T-cell (primary cell): ENCODE measurements at regions of chr9 and their contacts with region 1.

Region 1: DNA sequence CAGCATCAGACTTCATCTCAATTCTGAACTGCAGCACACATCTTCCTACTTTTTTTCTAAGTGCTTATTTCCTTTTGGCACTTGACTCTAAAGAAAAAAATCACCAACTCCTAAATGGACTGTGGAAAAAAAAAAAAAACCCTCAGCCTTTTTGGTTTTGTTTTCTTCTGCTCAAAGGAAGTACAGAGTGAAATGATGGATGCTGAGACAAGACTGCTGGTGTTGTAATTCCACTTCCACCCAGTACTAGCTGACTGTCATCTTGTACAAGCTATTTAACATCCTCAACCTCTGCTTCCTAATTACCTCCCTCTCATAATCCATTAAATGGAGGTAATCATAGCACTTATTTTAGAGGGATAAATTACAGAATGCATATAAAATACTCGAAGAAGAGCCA is 171.5 kb upstream of the GNA14 start:
- DNase-seq: no peak
- ATAC-seq: peak in 1 of 4 experiments; percentile 64
- H3K4me3 ChIP-seq: no peak overlapping the region
- H3K4me3 Mint-ChIP-seq: no peak overlapping the region
- H3K27ac ChIP-seq: no peak overlapping the region
- H3K27ac Mint-ChIP-seq: no peak overlapping the region
- H3K4me1 ChIP-seq: no peaks in the 10 kb centered on the region
- H3K4me1 Mint-ChIP-seq: peaks cover 16 to 30% (median 16%) of the 10 kb centered on the region in 3 donors
- H3K27me3 ChIP-seq: no peaks in the 10 kb centered on the region
- H3K27me3 Mint-ChIP-seq: no peaks in the 10 kb centered on the region

Region 2: GRCh38 chr9:77304543-77304942 is 515.1 kb before region 1 on chr9:
- CTCF ChIA-PET with region 1: no interaction called
- POLR2A ChIA-PET with region 1: no interaction called
- DNase-seq: no peak
- ATAC-seq: no peak
- H3K4me3 ChIP-seq: no peak overlapping the region
- H3K4me3 Mint-ChIP-seq: no peak overlapping the region
- H3K27ac ChIP-seq: no peak overlapping the region
- H3K27ac Mint-ChIP-seq: no peak overlapping the region
- H3K4me1 ChIP-seq: no peaks in the 10 kb centered on the region
- H3K4me1 Mint-ChIP-seq: no peaks in the 10 kb centered on the region
- H3K27me3 ChIP-seq: no peaks in the 10 kb centered on the region
- H3K27me3 Mint-ChIP-seq: no peaks in the 10 kb centered on the region

Region 3: DNA sequence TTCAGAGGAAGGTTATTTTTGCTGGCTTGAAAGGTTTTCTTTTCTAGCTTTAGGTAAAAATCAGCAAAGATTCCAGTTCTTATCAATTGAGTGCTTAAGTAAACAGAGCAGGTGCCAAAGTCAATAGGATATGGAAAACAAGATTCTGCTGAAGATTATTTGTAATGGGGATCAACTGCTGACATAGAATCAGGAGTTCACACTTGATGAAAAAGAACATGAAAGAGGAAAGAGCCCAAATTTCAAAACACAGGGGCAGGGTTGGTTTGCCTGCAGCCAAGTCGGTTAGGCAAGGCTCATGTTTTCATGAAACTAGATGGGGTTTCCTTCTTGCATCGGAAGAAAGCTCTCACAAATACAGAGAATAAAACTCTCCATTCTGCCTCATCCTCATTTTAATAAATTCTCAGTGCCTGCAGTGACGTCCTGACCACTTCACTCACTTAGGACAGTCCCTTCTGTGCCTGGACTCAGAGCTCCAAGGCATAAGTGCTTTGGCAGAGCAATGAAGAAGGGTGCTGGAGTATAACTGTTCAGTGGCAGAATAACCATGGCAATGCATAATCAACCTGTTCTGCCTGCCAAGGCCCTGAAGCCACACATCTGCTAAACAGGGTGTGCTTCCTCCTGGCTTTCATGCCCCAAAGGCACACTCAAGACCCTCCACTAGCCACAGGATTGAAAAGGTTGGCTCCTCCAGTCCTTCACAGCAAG is 32.4 kb after region 1 on chr9:
- CTCF ChIA-PET with region 1: interaction called in 1 of 2 experiments, 6 read pairs
- POLR2A ChIA-PET with region 1: interaction called in 1 of 2 experiments, 16 read pairs
- DNase-seq: no peak
- ATAC-seq: no peak
- H3K4me3 ChIP-seq: no peak overlapping the region
- H3K4me3 Mint-ChIP-seq: no peak overlapping the region
- H3K27ac ChIP-seq: no peak overlapping the region
- H3K27ac Mint-ChIP-seq: no peak overlapping the region
- H3K4me1 ChIP-seq: peaks cover 6 to 15% of the 10 kb centered on the region in 2 experiments
- H3K4me1 Mint-ChIP-seq: peaks cover 37 to 46% (median 42%) of the 10 kb centered on the region in 3 donors
- H3K27me3 ChIP-seq: no peaks in the 10 kb centered on the region
- H3K27me3 Mint-ChIP-seq: no peaks in the 10 kb centered on the region